Activated naive CD4-positive, alpha-beta T cell treated with anti-CD3 and anti-CD28 coated beads for 36 hours (primary cell): ENCODE measurements at regions of chr13 and their contacts with region 1.

Region 1: DNA sequence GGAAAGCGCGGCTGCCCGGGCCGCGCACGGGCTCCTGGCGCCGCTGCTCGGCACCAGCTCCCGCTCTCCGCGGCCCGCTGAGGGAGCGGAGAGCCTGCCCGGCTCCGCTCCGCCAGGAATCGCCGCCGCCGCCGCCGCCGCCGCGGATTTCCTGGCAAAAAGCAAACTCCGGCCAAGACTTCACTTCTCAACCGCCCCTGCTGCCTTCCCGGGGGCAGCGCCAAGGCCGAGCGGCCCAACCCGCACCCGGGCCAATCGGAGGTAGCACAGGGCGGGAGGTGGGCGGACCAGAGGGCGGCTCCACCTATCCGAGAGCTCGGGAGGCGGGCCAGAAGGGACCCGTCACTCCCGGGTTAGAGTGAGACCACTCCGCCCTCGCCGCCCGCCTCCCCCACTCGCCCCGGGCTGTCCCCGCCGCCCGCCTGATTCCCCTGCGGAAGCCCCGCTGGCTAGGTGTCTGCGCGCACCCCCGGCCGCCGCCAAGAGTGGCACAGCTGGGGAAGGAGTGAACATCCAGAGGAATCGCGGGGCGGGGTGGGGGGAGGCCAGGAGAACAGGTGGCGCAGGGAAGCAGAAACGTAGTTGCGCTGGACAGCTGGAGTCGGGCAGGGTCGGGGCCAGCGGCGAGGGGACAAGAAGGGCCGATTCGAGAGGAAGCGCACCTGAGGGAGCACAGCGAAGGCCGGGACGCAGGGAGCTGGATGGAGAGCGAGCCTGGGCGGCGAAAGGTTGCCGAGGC is at the start of gene LNX2:
- DNase-seq: peak; percentile 97
- H3K4me3 Mint-ChIP-seq: peak within 1 kb of the TSS; percentile 87
- H3K27ac Mint-ChIP-seq: peak within 1 kb of the TSS; percentile 89
- H3K4me1 Mint-ChIP-seq: peaks cover 52% of the 10 kb centered on the region
- H3K27me3 Mint-ChIP-seq: no peaks in the 10 kb centered on the region
- total RNA-seq, gene LNX2: 5.8 to 6.4 TPM

Region 2: DNA sequence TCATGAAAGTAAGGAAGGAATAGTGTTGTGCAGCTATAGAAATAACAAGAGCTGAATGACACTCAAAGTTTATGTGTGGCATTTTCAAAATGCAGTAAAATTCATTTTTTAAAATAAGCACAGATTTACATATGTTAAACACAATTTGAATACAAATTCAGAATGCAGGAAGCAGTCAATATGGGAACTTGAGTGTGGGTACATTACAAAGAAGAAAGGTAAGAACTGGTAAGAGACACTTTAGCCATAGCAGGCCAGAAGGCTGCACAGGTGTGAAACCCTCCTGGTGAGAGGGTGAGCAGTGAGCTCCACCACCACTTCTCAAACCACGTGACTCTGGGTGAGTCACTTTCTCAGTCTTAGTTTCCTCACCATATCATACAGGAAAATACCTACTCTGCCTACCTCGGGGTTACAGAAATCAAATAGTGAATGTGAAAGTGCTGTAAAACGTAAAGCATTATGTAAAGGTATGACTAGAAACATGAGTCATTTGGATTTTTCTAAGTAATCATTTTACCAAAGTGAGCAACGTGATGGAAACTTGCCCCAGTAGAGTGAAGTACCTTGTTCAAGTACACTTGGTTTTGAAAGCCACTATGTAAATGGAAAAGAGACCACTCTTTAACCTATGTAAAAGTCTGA is 489.4 kb before region 1 on chr13:
- CTCF ChIA-PET with region 1: no interaction called
- intact Hi-C with region 1: loop called (anchors 10 kb)
- DNase-seq: peak; percentile 89
- H3K4me3 Mint-ChIP-seq: no peak overlapping the region
- H3K27ac Mint-ChIP-seq: peak overlapping the region; percentile 91
- H3K4me1 Mint-ChIP-seq: peaks cover 88% of the 10 kb centered on the region
- H3K27me3 Mint-ChIP-seq: no peaks in the 10 kb centered on the region

Region 3: DNA sequence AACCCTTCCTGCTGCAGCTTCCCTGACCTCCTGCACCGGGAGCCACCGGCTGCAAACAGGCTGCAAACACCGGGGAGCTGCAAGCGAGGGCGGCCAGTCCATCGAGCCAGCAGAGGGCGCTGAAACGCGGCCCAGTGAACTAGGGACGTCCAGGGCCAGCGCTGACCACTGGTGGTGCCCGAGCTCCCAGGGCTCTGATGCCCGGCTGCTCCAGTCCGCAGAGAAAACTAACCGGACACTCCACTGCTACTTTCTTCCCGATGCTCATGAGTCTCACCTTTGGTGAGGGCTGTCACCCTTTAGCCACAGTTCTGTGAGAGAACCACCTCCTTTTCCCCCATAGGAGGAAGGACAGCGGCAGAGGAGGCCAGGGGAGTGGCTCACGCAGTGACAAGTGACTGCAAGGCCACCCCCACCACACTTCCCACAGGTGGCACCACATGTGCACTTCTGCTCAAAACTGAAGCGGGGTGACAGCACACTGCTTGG is 87.3 kb before region 1 on chr13:
- CTCF ChIA-PET with region 1: no interaction called
- intact Hi-C with region 1: loop called (anchors 5 kb)
- DNase-seq: peak; percentile 61
- H3K4me3 Mint-ChIP-seq: no peak overlapping the region
- H3K27ac Mint-ChIP-seq: no peak overlapping the region
- H3K4me1 Mint-ChIP-seq: peaks cover 8% of the 10 kb centered on the region
- H3K27me3 Mint-ChIP-seq: peaks cover 2% of the 10 kb centered on the region

Region 4: GRCh38 chr13:27792393-27793218 is 172.1 kb after region 1 on chr13 and contains the start of gene GSX1:
- CTCF ChIA-PET with region 1: no interaction called
- intact Hi-C with region 1: loop called (anchors 2 kb)
- DNase-seq: peak; percentile 69
- H3K4me3 Mint-ChIP-seq: peak within 1 kb of the TSS; percentile 71
- H3K27ac Mint-ChIP-seq: no peak within 1 kb of the TSS
- H3K4me1 Mint-ChIP-seq: peaks cover 38% of the 10 kb centered on the region
- H3K27me3 Mint-ChIP-seq: peaks cover 76% of the 10 kb centered on the region
- total RNA-seq, gene GSX1: not detected